ENCODE measurements at regions of chr17 and their contacts with region 1.

Region 1: GRCh38 chr17:60641810-60642220 is 35.8 kb upstream of the BCAS3 start:
- DNase-seq: peak; percentile 81 to 85
- ATAC-seq: peak; percentile 70 to 85
- H3K4me3 ChIP-seq: no peak overlapping the region
- H3K27ac ChIP-seq: no peak overlapping the region
- H3K4me1 ChIP-seq: peaks cover 10% of the 10 kb centered on the region
- CTCF ChIP-seq: peak; percentile 56
- EP300 ChIP-seq: no peak
- POLR2A ChIP-seq: no peak
- RAD21 ChIP-seq: peak; percentile 48 to 62

Region 2: GRCh38 chr17:60525685-60526514 is 115.9 kb before region 1 on chr17 and contains the start of gene APPBP2:
- CTCF ChIA-PET with region 1: interaction called, 10 read pairs
- POLR2A ChIA-PET with region 1: no interaction called
- DNase-seq: peak; percentile 87 to 93
- ATAC-seq: peak; percentile 97 to 98
- H3K4me3 ChIP-seq: peak within 1 kb of the TSS; percentile 90
- H3K27ac ChIP-seq: peak within 1 kb of the TSS; percentile 91 to 93
- H3K4me1 ChIP-seq: peaks cover 18% of the 10 kb centered on the region; the same call in 2 of the 3 replicates
- CTCF ChIP-seq: no peak
- EP300 ChIP-seq: no peak
- POLR2A ChIP-seq: peak; percentile 96
- RAD21 ChIP-seq: no peak; a peak in 1 of 5 replicates
- polyA plus RNA-seq, gene APPBP2: 22.5 and 31.6 TPM in 2 replicates

Region 3: DNA sequence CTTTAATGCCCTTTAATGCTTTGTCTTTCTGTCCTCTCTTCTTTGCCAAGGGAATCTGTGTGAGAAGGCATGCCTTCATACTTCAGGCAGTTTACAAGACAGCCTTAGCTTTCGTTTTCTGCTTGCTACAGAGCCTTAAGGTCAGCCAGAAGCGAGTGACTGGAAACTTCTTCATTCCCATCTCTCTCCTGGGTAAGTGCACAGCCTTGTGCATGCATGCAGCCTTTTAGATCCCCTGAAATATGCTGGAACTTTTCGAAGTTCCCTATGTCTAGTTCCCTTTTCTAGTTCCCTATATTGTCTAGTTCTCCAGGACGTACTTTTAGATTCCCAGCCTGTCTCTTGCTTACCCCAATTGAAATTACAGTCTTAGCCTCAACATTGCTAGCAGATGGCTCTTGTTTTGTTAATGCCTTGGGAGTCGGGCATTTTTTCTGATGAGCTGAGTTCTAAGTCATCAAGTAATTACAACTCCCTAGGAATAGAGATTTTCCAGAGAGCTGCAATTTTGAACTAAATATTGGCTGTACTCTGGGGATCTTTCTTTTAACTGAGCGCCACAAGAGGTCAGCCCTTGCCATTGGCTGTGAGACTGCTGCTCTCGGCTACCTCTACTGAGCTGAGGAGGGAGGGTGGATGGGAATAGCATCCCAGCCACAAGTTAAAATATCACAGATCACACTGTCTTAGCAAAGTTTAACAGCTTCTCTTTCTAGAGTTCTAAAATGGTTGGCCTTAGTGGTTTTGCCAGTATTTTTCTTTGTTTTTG is 64.5 kb before region 1 on chr17:
- CTCF ChIA-PET with region 1: interaction called, 41 read pairs
- POLR2A ChIA-PET with region 1: interaction called, 6 read pairs
- DNase-seq: no peak
- ATAC-seq: peak; percentile 89 to 92; a peak in 5 of 6 replicates
- H3K4me3 ChIP-seq: no peak overlapping the region
- H3K27ac ChIP-seq: 0 out of 6 replicates have a peak overlapping the region, but pooled peaks of 1 of the 2 experiments have one; percentile 17
- H3K4me1 ChIP-seq: no peaks in the 10 kb centered on the region
- CTCF ChIP-seq: peak; percentile 40; the same call in 2 of the 3 replicates
- EP300 ChIP-seq: no peak
- POLR2A ChIP-seq: no peak
- RAD21 ChIP-seq: peak in 1 of 2 experiments; percentile 52; a peak in 3 of 5 replicates

Region 4: GRCh38 chr17:60599620-60600489 is 42.0 kb before region 1 on chr17 and contains the start of gene PPM1D:
- CTCF ChIA-PET with region 1: interaction called, 34 read pairs
- POLR2A ChIA-PET with region 1: interaction called, 5 read pairs
- DNase-seq: peak; percentile 99 to 100
- ATAC-seq: peak; percentile 84 to 92
- H3K4me3 ChIP-seq: peak within 1 kb of the TSS; percentile 88
- H3K27ac ChIP-seq: peak within 1 kb of the TSS; percentile 86 to 89
- H3K4me1 ChIP-seq: peaks cover 24% of the 10 kb centered on the region
- CTCF ChIP-seq: no peak
- EP300 ChIP-seq: no peak
- POLR2A ChIP-seq: peak; percentile 78
- RAD21 ChIP-seq: peak in 1 of 2 experiments; percentile 14; a peak in 1 of 5 replicates
- polyA plus RNA-seq, gene PPM1D: 10.5 and 11.6 TPM in 2 replicates

Region 5: GRCh38 chr17:60618854-60619412 is 22.9 kb before region 1 on chr17:
- CTCF ChIA-PET with region 1: interaction called, 80 read pairs
- POLR2A ChIA-PET with region 1: no interaction called
- DNase-seq: no peak
- ATAC-seq: no peak; a peak in 1 of 6 replicates
- H3K4me3 ChIP-seq: no peak overlapping the region
- H3K27ac ChIP-seq: no peak overlapping the region
- H3K4me1 ChIP-seq: peaks cover 14% of the 10 kb centered on the region
- CTCF ChIP-seq: no peak
- EP300 ChIP-seq: no peak
- POLR2A ChIP-seq: no peak
- RAD21 ChIP-seq: no peak

Region 6: DNA sequence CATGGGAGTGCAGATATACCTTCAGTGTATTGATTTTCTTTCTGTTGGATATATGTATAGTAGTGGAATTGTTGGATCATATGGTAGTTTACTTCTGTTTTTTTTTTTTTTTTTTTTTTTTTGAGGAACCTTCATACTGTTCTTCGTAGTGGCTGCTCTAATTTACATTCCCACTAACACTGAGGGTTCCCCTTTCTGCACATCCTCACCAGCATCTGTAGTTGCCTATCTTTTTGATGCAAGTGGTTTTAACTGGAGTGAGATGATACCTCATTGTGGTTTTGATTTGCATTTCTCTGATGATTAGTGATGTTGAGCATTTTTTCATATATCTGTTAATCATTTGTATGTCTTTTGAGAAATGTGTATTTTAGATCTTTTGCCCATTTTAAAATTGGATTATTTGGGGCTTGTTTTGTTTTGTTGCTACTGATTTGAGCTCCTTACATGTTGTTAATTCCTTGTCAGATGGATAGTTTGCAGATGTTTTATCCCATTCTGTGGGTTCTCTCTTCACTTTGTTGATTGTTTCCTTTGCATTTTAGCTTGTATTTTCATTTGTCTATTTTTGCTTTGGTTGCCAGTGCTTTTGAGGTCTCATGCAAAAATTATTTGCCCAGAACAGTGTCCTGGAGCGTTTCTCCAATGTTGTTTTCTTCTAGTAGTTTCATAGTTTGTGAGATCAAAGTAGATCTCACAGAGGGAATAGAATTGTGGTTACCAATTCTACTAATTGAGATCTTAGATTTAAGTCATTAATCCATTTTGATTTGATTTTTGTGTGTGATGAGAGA is 10.8 kb after region 1 on chr17:
- CTCF ChIA-PET with region 1: interaction called, 53 read pairs
- POLR2A ChIA-PET with region 1: no interaction called
- DNase-seq: no peak
- ATAC-seq: no peak
- H3K4me3 ChIP-seq: no peak overlapping the region
- H3K27ac ChIP-seq: no peak overlapping the region
- H3K4me1 ChIP-seq: no peaks in the 10 kb centered on the region
- CTCF ChIP-seq: no peak
- EP300 ChIP-seq: no peak
- POLR2A ChIP-seq: no peak
- RAD21 ChIP-seq: no peak

Region 7: DNA sequence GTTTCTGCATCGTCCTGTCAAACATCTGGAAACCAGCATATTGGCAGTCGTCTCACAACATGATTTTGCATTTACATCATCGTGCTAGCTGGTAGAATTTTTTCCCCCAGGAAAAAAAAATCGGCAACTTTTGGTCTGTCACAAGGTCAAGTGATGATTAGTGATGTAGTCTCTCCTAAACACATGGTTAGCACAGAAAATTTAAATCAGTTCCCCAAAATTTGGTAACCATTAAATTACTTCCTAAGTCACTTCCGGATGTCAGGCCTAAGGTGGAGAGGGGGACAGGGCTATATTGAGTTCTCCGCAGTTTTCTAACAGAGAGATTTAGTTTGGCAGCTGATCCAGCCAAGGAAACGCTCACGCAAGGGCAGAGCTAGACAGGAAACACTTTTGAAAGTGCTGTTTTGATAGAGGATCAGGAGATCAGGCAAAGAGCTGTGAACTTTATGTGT is 486.9 kb after region 1 on chr17:
- CTCF ChIA-PET with region 1: no interaction called
- POLR2A ChIA-PET with region 1: no interaction called
- DNase-seq: no peak
- ATAC-seq: no peak
- H3K4me3 ChIP-seq: no peak overlapping the region
- H3K27ac ChIP-seq: no peak overlapping the region
- H3K4me1 ChIP-seq: no peaks in the 10 kb centered on the region
- CTCF ChIP-seq: no peak
- EP300 ChIP-seq: no peak
- POLR2A ChIP-seq: no peak
- RAD21 ChIP-seq: no peak